ENCODE measurements at regions of chr1 and their contacts with region 1.

Region 1: DNA sequence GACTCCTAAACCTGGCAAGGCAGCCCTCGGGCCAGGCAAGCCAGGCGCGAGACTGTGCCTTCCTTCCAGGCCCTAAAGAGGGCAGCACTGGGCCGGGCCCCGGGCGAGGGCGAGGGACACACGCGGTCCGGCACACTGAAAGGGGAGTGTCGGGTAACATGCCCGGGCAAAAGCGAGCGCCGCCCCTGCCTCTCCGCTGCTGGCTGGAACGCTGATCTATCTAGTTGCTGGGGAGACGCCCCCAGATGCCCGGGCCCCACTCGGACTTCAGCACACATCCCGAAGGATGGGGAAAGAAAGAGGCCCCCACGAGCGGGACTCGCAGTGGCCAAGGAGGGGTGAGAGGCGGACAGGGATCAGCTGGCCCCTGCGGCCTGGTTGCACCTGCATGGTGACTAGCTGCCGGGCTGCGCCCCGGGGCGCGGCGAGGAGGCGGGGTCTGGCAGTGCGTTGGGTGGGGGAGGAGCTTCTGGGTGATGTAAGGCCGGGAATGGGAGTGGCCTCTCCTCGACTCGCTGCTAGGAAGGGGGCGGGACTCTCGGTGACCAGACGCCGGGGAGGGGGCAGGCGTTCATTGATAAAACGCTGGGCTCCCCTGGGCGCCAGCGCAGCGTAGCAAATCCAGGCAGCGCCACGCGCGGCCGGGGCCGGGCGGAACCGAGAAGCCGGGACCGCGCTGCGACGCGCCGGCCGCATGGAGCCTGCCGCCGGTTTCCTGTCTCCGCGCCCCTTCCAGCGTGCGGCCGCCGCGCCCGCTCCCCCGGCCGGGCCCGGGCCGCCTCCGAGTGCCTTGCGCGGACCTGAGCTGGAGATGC is at the start of gene PLK3:
- DNase-seq: peak; percentile 97 to 100 (median 98)
- ATAC-seq: peak; percentile 77
- H3K4me3 ChIP-seq: peak within 1 kb of the TSS; percentile 99
- H3K4me3 Mint-ChIP-seq: peak within 1 kb of the TSS; percentile 99
- H3K27ac ChIP-seq: peak within 1 kb of the TSS; percentile 88 to 98
- H3K27ac Mint-ChIP-seq: peak within 1 kb of the TSS; percentile 86
- H3K4me1 ChIP-seq: peaks cover 48% of the 10 kb centered on the region
- H3K4me1 Mint-ChIP-seq: peaks cover 39% of the 10 kb centered on the region
- H3K27me3 ChIP-seq: no peaks in the 10 kb centered on the region
- H3K27me3 Mint-ChIP-seq: no peaks in the 10 kb centered on the region
- CTCF ChIP-seq: peak; percentile 79
- total RNA-seq, gene PLK3: 794 TPM

Region 2: GRCh38 chr1:44721485-44722361 is 78.3 kb before region 1 on chr1:
- CTCF ChIA-PET with region 1: no interaction called
- POLR2A ChIA-PET with region 1: interaction called, 53 read pairs
- intact Hi-C with region 1: no loop called
- DNase-seq: peak; percentile 16 to 93 (median 48)
- ATAC-seq: peak; percentile 75
- H3K4me3 ChIP-seq: peak overlapping the region; percentile 6
- H3K4me3 Mint-ChIP-seq: peak overlapping the region; percentile 84
- H3K27ac ChIP-seq: peak overlapping the region; percentile 30 to 76
- H3K27ac Mint-ChIP-seq: peak overlapping the region; percentile 90
- H3K4me1 ChIP-seq: peaks cover 77% of the 10 kb centered on the region
- H3K4me1 Mint-ChIP-seq: peaks cover 68% of the 10 kb centered on the region
- H3K27me3 ChIP-seq: no peaks in the 10 kb centered on the region
- H3K27me3 Mint-ChIP-seq: no peaks in the 10 kb centered on the region
- CTCF ChIP-seq: no peak

Region 3: DNA sequence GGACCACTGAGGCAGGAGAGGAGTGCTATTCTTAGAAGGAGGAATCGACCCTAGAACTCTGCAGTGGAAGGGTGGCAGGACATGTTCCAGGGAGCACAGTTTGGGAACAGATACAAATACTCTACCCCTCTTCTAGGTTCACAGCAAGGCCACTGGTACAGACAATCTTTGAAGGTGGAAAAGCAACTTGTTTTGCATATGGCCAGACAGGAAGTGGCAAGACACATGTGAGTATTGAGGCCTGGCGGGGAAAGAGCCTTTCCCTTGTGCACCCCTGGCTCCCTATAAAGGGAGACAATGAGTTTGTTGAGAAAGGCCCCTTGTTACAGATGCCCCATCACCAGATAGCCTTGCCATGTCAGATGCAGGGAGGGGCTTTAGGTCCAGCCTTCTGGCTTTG is 42.6 kb before region 1 on chr1:
- CTCF ChIA-PET with region 1: no interaction called
- POLR2A ChIA-PET with region 1: no interaction called
- intact Hi-C with region 1: no loop called
- DNase-seq: no peak
- ATAC-seq: no peak
- H3K4me3 ChIP-seq: no peak overlapping the region
- H3K4me3 Mint-ChIP-seq: no peak overlapping the region
- H3K27ac ChIP-seq: no peak overlapping the region
- H3K27ac Mint-ChIP-seq: no peak overlapping the region
- H3K4me1 ChIP-seq: peaks cover 5% of the 10 kb centered on the region
- H3K4me1 Mint-ChIP-seq: no peaks in the 10 kb centered on the region
- H3K27me3 ChIP-seq: no peaks in the 10 kb centered on the region
- H3K27me3 Mint-ChIP-seq: no peaks in the 10 kb centered on the region
- CTCF ChIP-seq: no peak

Region 4: DNA sequence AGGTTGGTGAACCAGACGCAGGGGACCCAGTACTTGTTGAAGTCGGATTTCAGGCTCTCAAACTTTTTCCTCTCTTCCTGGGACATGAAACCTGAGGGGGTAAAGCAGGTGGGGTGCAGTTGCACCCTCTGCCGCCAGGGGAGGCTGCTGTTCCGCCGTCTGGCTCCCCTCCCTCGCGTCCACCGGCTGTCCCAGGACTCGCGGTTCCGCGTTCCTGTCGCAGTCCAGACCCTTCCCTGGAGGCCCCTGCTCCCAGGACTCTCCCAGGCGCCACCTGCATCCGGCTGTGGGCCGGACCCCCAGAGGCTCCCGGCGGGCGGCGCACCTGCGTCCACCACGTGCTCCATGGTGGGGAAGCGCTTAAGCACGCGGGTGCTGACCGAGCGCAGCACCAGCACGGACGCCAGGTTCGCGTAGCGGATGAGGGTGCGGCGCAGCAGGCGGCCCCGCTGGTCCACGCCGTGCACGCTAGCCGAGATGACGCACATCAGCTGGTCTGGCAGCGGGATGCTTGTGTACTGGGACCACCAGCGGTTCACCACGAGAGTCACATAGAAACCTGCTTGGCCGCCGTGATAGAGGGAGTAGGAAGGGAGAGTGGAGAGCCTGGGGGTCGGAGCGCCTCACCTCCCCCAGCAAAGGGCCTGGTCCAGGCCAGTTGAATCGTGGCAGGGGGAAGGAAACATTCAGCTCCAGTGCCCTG is 13.7 kb before region 1 on chr1:
- CTCF ChIA-PET with region 1: interaction called, 19 read pairs
- POLR2A ChIA-PET with region 1: interaction called, 20 read pairs
- intact Hi-C with region 1: loop called in 1 of 2 experiments (anchors 2 kb)
- DNase-seq: peak; percentile 64 to 89 (median 74)
- ATAC-seq: peak; percentile 84
- H3K4me3 ChIP-seq: peak overlapping the region; percentile 58
- H3K4me3 Mint-ChIP-seq: peak overlapping the region; percentile 86
- H3K27ac ChIP-seq: peak overlapping the region; percentile 4 to 37
- H3K27ac Mint-ChIP-seq: peak overlapping the region; percentile 53
- H3K4me1 ChIP-seq: peaks cover 35% of the 10 kb centered on the region
- H3K4me1 Mint-ChIP-seq: peaks cover 31% of the 10 kb centered on the region
- H3K27me3 ChIP-seq: no peaks in the 10 kb centered on the region
- H3K27me3 Mint-ChIP-seq: no peaks in the 10 kb centered on the region
- CTCF ChIP-seq: peak; percentile 99

Region 5: GRCh38 chr1:44835738-44836675 is 36.0 kb after region 1 on chr1:
- CTCF ChIA-PET with region 1: interaction called, 6 read pairs
- POLR2A ChIA-PET with region 1: interaction called, 13 read pairs
- intact Hi-C with region 1: loop called in 1 of 2 experiments (anchors 2 kb)
- DNase-seq: peak; percentile 77 to 93 (median 84)
- ATAC-seq: peak; percentile 98
- H3K4me3 ChIP-seq: no peak overlapping the region
- H3K4me3 Mint-ChIP-seq: no peak overlapping the region
- H3K27ac ChIP-seq: no peak overlapping the region
- H3K27ac Mint-ChIP-seq: no peak overlapping the region
- H3K4me1 ChIP-seq: peaks cover 9% of the 10 kb centered on the region
- H3K4me1 Mint-ChIP-seq: peaks cover 8% of the 10 kb centered on the region
- H3K27me3 ChIP-seq: no peaks in the 10 kb centered on the region
- H3K27me3 Mint-ChIP-seq: peaks cover 11% of the 10 kb centered on the region
- CTCF ChIP-seq: peak; percentile 91

Region 6: DNA sequence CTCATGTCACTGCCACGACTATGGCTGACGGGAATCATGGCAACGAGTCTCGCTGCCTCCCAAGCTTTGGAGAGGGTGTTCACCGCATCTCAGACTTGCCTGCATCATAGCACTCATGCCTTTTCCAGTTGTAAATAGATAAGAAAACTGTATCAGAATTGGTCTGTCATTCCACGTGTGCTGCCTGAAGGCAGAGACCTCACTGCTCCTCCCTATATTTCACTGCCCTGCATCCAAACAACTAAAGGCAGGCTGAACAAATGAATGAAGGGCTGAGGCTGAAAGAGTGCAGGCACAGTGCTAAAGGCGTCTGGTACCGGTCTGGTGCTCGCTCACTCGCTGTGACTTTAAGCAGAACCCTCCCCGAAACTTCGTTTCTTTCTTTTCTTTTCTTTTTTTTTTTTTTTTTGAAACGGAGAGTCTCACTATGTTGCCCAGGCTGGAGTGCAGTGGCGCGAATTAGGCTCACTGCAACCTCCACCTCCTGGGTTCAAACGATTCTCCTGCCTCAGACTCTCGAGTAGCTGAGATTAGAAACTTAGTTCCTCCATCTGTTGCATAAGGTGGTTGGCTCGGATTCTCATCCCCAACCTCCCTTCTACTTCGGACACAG is 185.9 kb after region 1 on chr1:
- CTCF ChIA-PET with region 1: no interaction called
- POLR2A ChIA-PET with region 1: interaction called, 14 read pairs
- intact Hi-C with region 1: loop called in 1 of 2 experiments (anchors 10 kb)
- DNase-seq: no peak
- ATAC-seq: no peak
- H3K4me3 ChIP-seq: peak overlapping the region; percentile 73
- H3K4me3 Mint-ChIP-seq: peak overlapping the region; percentile 99
- H3K27ac ChIP-seq: no peak overlapping the region
- H3K27ac Mint-ChIP-seq: peak overlapping the region; percentile 74
- H3K4me1 ChIP-seq: peaks cover 20% of the 10 kb centered on the region
- H3K4me1 Mint-ChIP-seq: peaks cover 32% of the 10 kb centered on the region
- H3K27me3 ChIP-seq: no peaks in the 10 kb centered on the region
- H3K27me3 Mint-ChIP-seq: no peaks in the 10 kb centered on the region
- CTCF ChIP-seq: no peak